ENCODE measurements at regions of chr13 and their contacts with region 1.

Region 1: DNA sequence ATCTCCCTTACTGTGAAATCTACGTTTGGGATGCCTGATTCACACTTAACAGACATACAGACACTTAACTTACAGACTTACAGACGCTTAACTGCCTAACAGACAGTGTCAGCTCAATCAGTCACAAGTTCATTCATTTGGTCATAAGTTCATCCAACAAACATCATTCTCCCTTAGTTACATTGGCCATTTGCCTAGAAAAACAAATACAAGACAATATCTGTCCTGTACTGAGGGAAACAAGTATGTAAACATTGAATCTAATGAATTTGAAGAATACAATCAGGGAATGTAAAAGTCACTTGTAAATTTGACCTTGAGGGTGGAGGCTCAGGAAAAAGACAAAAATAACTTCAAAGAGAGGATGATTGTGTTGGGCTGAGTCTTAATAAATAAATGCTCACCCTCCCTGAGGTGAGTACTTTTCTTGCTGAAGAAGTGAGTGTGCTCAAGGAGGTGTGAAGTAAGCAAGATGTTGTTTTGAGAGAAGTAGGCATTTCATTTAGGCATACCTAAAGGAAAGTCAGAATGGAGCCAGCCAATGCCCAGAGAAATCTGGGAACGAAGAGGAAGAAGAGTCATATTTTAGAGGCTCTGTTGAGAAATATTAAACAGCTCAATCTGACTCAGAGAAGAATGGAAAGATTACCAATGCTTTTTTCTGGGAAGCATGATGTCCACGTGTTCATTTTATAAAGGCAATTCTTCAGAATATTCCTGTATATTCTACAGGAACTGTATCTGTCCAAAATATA is 958.4 kb upstream of the SLC10A2 start:
- DNase-seq: no peak
- H3K4me3 Mint-ChIP-seq: no peak overlapping the region
- H3K27ac Mint-ChIP-seq: no peak overlapping the region
- H3K4me1 Mint-ChIP-seq: no peaks in the 10 kb centered on the region
- H3K27me3 Mint-ChIP-seq: no peaks in the 10 kb centered on the region

Region 2: DNA sequence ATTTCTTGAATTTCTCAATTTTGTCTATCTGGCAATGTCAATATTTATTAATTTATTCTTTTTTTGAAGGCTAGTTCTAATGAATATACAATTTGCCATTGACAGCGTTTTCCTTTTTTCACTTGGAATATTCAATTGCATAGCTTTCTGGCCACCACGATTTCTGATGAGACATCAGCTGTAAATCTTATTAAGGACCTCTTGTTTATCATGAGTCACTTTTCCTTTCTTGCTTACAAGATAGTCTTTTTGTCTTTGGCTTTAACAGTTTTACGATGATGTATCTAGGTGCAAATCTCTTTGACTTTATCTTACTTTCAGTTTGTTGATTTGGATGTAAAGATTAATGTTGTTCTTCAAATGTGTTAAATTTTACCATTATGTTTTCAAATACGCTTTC is 33.3 kb after region 1 on chr13:
- CTCF ChIA-PET with region 1: no interaction called
- intact Hi-C with region 1: no loop called
- DNase-seq: no peak
- H3K4me3 Mint-ChIP-seq: no peak overlapping the region
- H3K27ac Mint-ChIP-seq: no peak overlapping the region
- H3K4me1 Mint-ChIP-seq: no peaks in the 10 kb centered on the region
- H3K27me3 Mint-ChIP-seq: no peaks in the 10 kb centered on the region

Region 3: DNA sequence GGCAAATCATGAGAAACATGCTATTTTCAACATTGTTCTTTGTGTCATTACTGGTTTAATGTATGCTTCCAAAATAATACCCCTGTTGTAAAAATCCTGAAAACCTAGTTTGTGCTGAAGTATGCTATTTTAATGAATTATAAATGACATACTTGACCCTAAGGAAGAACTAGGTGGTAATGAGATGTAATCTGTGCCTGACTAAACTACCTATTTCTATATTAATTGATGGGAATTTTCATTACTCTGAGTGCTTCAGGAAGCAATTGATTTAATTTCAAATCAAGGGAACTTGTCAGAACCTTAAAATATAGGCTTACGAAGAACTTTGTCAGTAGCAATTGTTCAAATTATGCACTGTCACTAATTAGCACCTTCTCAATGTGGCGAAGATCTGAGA is 47.2 kb after region 1 on chr13:
- CTCF ChIA-PET with region 1: no interaction called
- intact Hi-C with region 1: loop called (anchors 1 kb)
- DNase-seq: no peak
- H3K4me3 Mint-ChIP-seq: no peak overlapping the region
- H3K27ac Mint-ChIP-seq: no peak overlapping the region
- H3K4me1 Mint-ChIP-seq: no peaks in the 10 kb centered on the region
- H3K27me3 Mint-ChIP-seq: no peaks in the 10 kb centered on the region

Measured in activated naive CD4-positive, alpha-beta T cell treated with anti-CD3 and anti-CD28 coated beads for 36 hours (primary cell).